ENCODE measurements at regions of chr10 and their contacts with region 1.

Region 1: DNA sequence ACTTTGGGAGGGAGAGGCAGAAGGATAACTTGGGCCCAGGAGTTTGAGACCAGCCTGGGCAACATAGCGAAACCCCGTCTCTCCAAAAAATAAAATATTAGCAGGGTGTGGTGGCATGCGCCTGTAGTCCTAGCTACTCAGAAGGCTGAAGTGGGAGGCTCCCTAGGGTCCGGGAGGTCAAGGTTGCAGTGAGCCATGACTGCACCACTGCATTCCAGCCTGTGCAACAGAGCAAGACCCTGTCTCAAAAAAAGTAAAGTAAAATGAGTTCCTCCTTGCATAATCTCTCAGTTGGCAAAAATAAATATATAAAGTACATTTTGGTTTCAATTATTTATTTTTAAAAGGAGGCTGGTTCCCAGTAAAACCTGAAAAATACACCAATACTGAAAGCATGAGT is 11.8 kb downstream of the NANOS1 start:
- DNase-seq: no peak
- ATAC-seq: no peak
- H3K4me3 Mint-ChIP-seq: no peak overlapping the region
- H3K27ac Mint-ChIP-seq: no peak overlapping the region
- H3K4me1 Mint-ChIP-seq: peaks cover 10% of the 10 kb centered on the region
- H3K27me3 Mint-ChIP-seq: no peaks in the 10 kb centered on the region

Region 2: GRCh38 chr10:119028900-119029612 is 12.3 kb before region 1 on chr10:
- POLR2A ChIA-PET with region 1: no interaction called
- DNase-seq: peak; percentile 85
- ATAC-seq: peak; percentile 84
- H3K4me3 Mint-ChIP-seq: peak overlapping the region; percentile 63
- H3K27ac Mint-ChIP-seq: no peak overlapping the region
- H3K4me1 Mint-ChIP-seq: peaks cover 12% of the 10 kb centered on the region
- H3K27me3 Mint-ChIP-seq: peaks cover 13% of the 10 kb centered on the region

Region 3: DNA sequence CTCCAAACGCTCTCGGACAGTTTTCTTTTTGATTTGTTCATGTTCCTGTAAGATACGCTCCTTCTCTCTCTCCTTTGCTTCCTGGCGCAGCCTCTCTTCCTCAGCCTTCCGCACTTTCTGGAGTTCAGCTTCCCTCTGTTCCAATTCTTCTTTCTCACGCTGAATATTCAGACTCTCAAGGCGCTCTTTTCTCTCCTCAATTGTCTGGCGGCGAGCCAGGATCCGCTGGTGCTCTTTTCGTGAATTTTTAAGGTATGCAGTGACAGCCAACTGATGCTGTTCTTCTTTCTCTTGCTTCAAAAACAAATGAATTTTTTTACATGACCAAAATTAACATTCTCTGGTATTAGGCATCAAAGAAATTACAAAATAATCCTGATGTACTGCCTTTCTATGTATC is 16.7 kb after region 1 on chr10:
- POLR2A ChIA-PET with region 1: interaction called, 10 read pairs
- DNase-seq: no peak
- ATAC-seq: no peak
- H3K4me3 Mint-ChIP-seq: no peak overlapping the region
- H3K27ac Mint-ChIP-seq: no peak overlapping the region
- H3K4me1 Mint-ChIP-seq: peaks cover 2% of the 10 kb centered on the region
- H3K27me3 Mint-ChIP-seq: no peaks in the 10 kb centered on the region